ENCODE measurements at regions of chrX and their contacts with region 1.

Region 1: DNA sequence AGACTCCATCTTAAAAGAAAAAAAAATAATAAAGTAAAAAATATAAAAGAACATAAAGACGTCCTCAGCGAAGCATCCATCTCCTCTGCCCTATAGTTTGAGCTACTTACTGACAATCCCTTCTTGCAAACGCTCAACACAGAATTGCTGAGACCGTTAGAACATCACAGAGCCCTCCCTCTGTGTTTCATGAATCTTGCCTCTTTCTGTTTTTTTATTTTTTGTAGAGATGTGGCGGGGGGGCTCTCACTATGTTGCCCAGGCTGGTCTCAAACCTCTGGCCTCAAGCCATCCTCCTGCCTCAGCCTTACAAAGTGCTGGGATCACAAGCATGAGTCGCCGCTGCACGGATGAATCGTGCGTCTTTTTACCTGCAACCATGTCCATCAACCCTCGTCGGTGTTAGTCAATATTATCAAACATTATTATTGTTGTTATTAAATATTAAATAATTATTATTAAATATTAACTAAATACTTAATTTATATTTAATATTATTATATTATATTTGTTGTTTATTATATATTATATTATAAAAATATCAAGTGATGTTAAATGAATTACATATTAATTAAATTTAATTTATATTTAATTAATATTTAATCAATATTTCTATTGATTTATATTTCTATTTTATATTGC is 200.7 kb downstream of the CRLF2 start:
- DNase-seq: peak in 3 of 9 donors; percentile 18 to 54 (median 41)
- ATAC-seq: no peak
- H3K4me3 ChIP-seq: no peak overlapping the region
- H3K4me3 Mint-ChIP-seq: no peak overlapping the region
- H3K27ac ChIP-seq: no peak overlapping the region
- H3K27ac Mint-ChIP-seq: peak overlapping the region in 2 of 9 donors; percentile 61 to 81
- H3K4me1 ChIP-seq: no peaks in the 10 kb centered on the region
- H3K4me1 Mint-ChIP-seq: peaks cover 0 to 4% (median 0%) of the 10 kb centered on the region in 7 donors
- H3K27me3 ChIP-seq: no peaks in the 10 kb centered on the region
- H3K27me3 Mint-ChIP-seq: no peaks in the 10 kb centered on the region

Region 2: GRCh38 chrX:915427-916229 is 96.1 kb before region 1 on chrX:
- CTCF ChIA-PET with region 1: no interaction called
- POLR2A ChIA-PET with region 1: no interaction called
- intact Hi-C with region 1: loop called in 1 of 2 experiments (anchors 5 kb)
- DNase-seq: peak in 6 of 9 donors; percentile 18 to 63 (median 43)
- ATAC-seq: peak; percentile 50
- H3K4me3 ChIP-seq: no peak overlapping the region
- H3K4me3 Mint-ChIP-seq: no peak overlapping the region
- H3K27ac ChIP-seq: no peak overlapping the region
- H3K27ac Mint-ChIP-seq: no peak overlapping the region
- H3K4me1 ChIP-seq: no peaks in the 10 kb centered on the region
- H3K4me1 Mint-ChIP-seq: no peaks in the 10 kb centered on the region
- H3K27me3 ChIP-seq: no peaks in the 10 kb centered on the region
- H3K27me3 Mint-ChIP-seq: peaks cover 0 to 6% (median 0%) of the 10 kb centered on the region in 5 donors

Region 3: DNA sequence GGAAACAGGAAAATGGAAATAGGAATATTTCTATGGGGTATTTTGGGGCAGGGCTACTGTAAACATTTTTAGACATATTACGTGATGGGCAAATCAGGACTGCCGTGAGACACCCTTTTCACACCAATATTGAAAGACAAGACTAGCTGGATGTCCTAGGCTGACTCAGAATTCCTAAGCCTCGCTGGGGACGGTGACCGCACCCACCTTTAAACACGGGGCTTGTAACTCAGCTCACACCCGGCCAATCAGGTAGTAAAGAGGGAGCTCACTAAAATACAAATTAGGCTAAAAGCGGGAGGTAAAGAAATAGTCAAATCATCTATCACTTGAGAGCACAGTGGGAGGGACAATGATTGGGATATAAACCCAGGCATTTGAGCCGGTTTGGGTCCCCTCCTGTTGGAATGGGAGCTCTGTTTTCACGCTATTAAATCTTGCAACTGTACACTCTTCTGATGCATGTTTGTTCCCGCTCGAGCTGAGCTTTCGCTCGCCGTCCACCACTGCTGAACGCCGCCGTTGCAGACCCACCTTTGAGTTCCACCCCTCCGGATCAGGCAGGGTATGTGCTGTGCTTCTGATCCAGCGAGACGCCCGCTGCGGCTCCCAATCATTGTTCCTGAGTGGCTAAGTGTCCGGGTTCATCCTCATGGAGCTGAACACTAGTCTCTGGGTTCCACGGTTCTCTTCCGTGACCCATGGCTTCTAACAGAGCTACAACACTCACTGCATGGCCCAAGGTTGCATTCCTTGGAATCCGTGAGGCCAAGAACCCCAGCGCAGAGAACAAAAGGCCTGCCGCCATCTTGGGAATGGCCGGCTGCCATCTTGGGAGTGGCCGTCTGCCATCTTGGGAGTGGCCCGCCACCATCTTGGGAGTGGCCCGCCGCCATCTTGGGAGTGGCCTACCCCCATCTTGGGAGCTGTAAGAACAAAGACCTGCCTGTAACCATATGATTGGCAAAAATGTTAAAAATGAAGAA is 48.1 kb after region 1 on chrX:
- CTCF ChIA-PET with region 1: no interaction called
- POLR2A ChIA-PET with region 1: no interaction called
- intact Hi-C with region 1: no loop called
- DNase-seq: no peak
- ATAC-seq: no peak
- H3K4me3 ChIP-seq: no peak overlapping the region
- H3K4me3 Mint-ChIP-seq: no peak overlapping the region
- H3K27ac ChIP-seq: no peak overlapping the region
- H3K27ac Mint-ChIP-seq: no peak overlapping the region
- H3K4me1 ChIP-seq: no peaks in the 10 kb centered on the region
- H3K4me1 Mint-ChIP-seq: no peaks in the 10 kb centered on the region
- H3K27me3 ChIP-seq: no peaks in the 10 kb centered on the region
- H3K27me3 Mint-ChIP-seq: peaks cover 0 to 17% (median 10%) of the 10 kb centered on the region in 5 donors

Region 4: GRCh38 chrX:1072637-1073377 is 61.0 kb after region 1 on chrX:
- CTCF ChIA-PET with region 1: no interaction called
- POLR2A ChIA-PET with region 1: no interaction called
- intact Hi-C with region 1: loop called in 1 of 2 experiments (anchors 10 kb)
- DNase-seq: no peak
- ATAC-seq: no peak
- H3K4me3 ChIP-seq: no peak overlapping the region
- H3K4me3 Mint-ChIP-seq: peak overlapping the region in 1 of 10 donors; percentile 16
- H3K27ac ChIP-seq: no peak overlapping the region
- H3K27ac Mint-ChIP-seq: peak overlapping the region in 2 of 9 donors; percentile 5 to 13
- H3K4me1 ChIP-seq: no peaks in the 10 kb centered on the region
- H3K4me1 Mint-ChIP-seq: peaks cover 0 to 10% (median 9%) of the 10 kb centered on the region in 7 donors
- H3K27me3 ChIP-seq: no peaks in the 10 kb centered on the region
- H3K27me3 Mint-ChIP-seq: peaks cover 7 to 16% (median 10%) of the 10 kb centered on the region in 5 donors

Region 5: GRCh38 chrX:1165535-1166196 is 153.9 kb after region 1 on chrX:
- CTCF ChIA-PET with region 1: no interaction called
- POLR2A ChIA-PET with region 1: no interaction called
- intact Hi-C with region 1: loop called in 1 of 2 experiments (anchors 5 kb)
- DNase-seq: peak in 5 of 9 donors; percentile 30 to 66 (median 46)
- ATAC-seq: peak; percentile 44
- H3K4me3 ChIP-seq: no peak overlapping the region
- H3K4me3 Mint-ChIP-seq: peak overlapping the region; percentile 1 to 75 (median 60)
- H3K27ac ChIP-seq: no peak overlapping the region
- H3K27ac Mint-ChIP-seq: peak overlapping the region in 4 of 9 donors; percentile 79 to 90 (median 82)
- H3K4me1 ChIP-seq: peaks cover 0 to 14% of the 10 kb centered on the region in 2 donors
- H3K4me1 Mint-ChIP-seq: peaks cover 12 to 32% (median 24%) of the 10 kb centered on the region in 7 donors
- H3K27me3 ChIP-seq: no peaks in the 10 kb centered on the region
- H3K27me3 Mint-ChIP-seq: peaks cover 0 to 27% (median 11%) of the 10 kb centered on the region in 5 donors